Activated CD4-positive, alpha-beta memory T cell treated with anti-CD3 and anti-CD28 coated beads for 36 hours (primary cell): ENCODE measurements at regions of chr4 and their contacts with region 1.

Region 1: DNA sequence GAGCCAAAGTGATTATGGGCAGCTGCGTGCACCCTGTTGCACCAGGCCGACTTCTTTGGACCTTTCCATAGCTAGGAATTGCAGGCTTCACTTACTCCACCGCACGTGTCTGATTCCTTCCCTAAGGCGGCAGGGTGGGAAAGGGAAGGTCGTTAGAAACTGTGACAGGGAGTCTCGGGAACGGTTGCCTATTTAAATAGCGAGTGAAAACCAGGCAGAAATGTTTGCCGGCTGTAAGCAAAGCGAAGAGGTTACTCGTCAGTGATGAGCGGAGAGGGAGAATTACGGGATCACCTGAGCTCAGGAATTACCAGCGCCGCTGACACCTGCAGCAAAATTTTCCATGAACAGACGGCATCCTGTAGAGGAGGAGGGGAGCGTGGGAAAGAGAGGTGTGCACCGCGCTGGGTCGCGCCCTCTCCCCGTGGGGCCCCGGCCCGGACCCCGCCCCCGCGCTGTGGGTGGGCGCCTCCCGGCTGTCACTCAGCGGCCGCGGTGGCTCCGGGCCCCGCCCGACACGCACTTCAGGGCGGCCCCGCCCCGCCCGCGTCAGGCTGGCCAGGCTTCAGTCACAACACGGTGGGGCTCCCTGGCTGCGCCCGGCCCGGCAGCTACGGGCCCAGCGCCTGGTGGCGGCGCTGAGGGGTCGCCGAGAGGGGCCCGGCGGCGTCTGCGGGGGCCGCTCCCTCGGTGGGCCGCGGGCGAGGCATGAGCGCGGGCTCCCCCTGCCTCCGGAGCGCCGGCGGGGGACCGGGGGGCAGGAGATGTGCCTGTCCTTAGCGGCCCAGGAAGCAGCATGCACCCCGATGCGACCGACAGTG is at the start of gene SNX25:
- DNase-seq: peak; percentile 91
- H3K4me3 Mint-ChIP-seq: peak within 1 kb of the TSS; percentile 88
- H3K27ac Mint-ChIP-seq: peak within 1 kb of the TSS; percentile 72
- H3K4me1 Mint-ChIP-seq: peaks cover 46% of the 10 kb centered on the region
- H3K27me3 Mint-ChIP-seq: no peaks in the 10 kb centered on the region
- total RNA-seq, gene SNX25: 18.9 to 21.6 TPM

Region 2: GRCh38 chr4:185304944-185305690 is 95.9 kb after region 1 on chr4:
- CTCF ChIA-PET with region 1: no interaction called
- POLR2A ChIA-PET with region 1: no interaction called
- intact Hi-C with region 1: loop called (anchors 1 kb)
- DNase-seq: peak; percentile 47
- H3K4me3 Mint-ChIP-seq: no peak overlapping the region
- H3K27ac Mint-ChIP-seq: no peak overlapping the region
- H3K4me1 Mint-ChIP-seq: no peaks in the 10 kb centered on the region
- H3K27me3 Mint-ChIP-seq: no peaks in the 10 kb centered on the region

Region 3: GRCh38 chr4:185343726-185344581 is 134.7 kb after region 1 on chr4:
- CTCF ChIA-PET with region 1: no interaction called
- POLR2A ChIA-PET with region 1: no interaction called
- intact Hi-C with region 1: loop called (anchors 2 kb)
- DNase-seq: peak; percentile 33
- H3K4me3 Mint-ChIP-seq: no peak overlapping the region
- H3K27ac Mint-ChIP-seq: peak overlapping the region; percentile 79
- H3K4me1 Mint-ChIP-seq: peaks cover 65% of the 10 kb centered on the region
- H3K27me3 Mint-ChIP-seq: no peaks in the 10 kb centered on the region